ENCODE measurements at regions of chr9 and their contacts with region 1.

Region 1: GRCh38 chr9:120755827-120756434 is 37.3 kb downstream of the FBXW2 start:
- DNase-seq: peak; percentile 64 to 78
- H3K4me3 ChIP-seq: no peak overlapping the region
- H3K27ac ChIP-seq: peak overlapping the region in 1 of 5 donors; percentile 37
- H3K4me1 ChIP-seq: peaks cover 0 to 16% (median 2%) of the 10 kb centered on the region in 4 donors
- H3K27me3 ChIP-seq: no peaks in the 10 kb centered on the region
- CTCF ChIP-seq: peak in 5 of 7 experiments; percentile 86 to 95 (median 90)
- EP300 ChIP-seq: no peak
- POLR2A ChIP-seq: no peak

Region 2: GRCh38 chr9:120936011-120936763 is 180.3 kb after region 1 on chr9:
- intact Hi-C with region 1: loop called (anchors 10 kb)
- DNase-seq: peak; percentile 95
- H3K4me3 ChIP-seq: peak overlapping the region in 1 of 4 donors; percentile 21
- H3K27ac ChIP-seq: peak overlapping the region; percentile 78 to 93 (median 84)
- H3K4me1 ChIP-seq: peaks cover 42 to 69% (median 52%) of the 10 kb centered on the region in 4 donors
- H3K27me3 ChIP-seq: no peaks in the 10 kb centered on the region
- CTCF ChIP-seq: peak in 5 of 7 experiments; percentile 81 to 92 (median 86)
- EP300 ChIP-seq: no peak
- POLR2A ChIP-seq: no peak

Region 3: GRCh38 chr9:121059998-121060636 is 304.2 kb after region 1 on chr9:
- intact Hi-C with region 1: loop called (anchors 5 kb)
- DNase-seq: peak in 1 of 2 donors; percentile 81
- H3K4me3 ChIP-seq: no peak overlapping the region
- H3K27ac ChIP-seq: no peak overlapping the region
- H3K4me1 ChIP-seq: peaks cover 0 to 19% (median 4%) of the 10 kb centered on the region in 4 donors
- H3K27me3 ChIP-seq: no peaks in the 10 kb centered on the region
- CTCF ChIP-seq: peak in 5 of 7 experiments; percentile 13 to 78 (median 59)
- EP300 ChIP-seq: no peak
- POLR2A ChIP-seq: no peak